ENCODE measurements at regions of chr19 and their contacts with region 1.

Region 1: DNA sequence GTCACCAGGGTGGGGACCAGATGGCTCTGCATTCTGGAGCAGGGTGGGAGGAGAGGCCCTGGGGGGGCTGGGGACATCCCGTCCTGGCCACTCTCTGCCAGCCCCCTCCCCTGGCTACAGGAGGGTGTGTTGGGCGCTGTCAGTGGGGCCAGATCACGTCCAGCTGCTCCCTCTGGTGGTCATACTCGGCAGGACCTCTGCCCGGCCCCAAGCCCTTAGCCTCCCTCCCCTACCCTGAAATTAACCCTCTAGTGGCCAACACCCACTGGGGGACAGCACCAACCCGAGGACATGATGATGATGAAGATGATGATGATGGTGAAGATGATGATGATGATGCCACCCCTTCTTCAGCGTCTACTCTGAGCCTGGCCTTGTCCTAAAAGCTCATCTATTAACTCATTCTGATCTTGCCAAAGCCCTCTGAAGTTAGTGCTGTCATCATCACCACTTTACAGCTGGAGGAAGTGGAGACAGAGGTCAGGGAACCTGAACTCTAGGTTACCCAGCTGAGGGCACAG is 590 bp upstream of the LGI4 start:
- DNase-seq: peak; percentile 81 to 99
- ATAC-seq: peak; percentile 64 to 91
- H3K4me3 ChIP-seq: no peak overlapping the region
- H3K27ac ChIP-seq: no peak overlapping the region
- H3K4me1 ChIP-seq: peaks cover 5% of the 10 kb centered on the region; the same call in 1 of the 3 replicates
- CTCF ChIP-seq: peak; percentile 95
- EP300 ChIP-seq: no peak
- POLR2A ChIP-seq: no peak
- RAD21 ChIP-seq: peak; percentile 76 to 86

Region 2: GRCh38 chr19:35006342-35007018 is 129.0 kb before region 1 on chr19:
- CTCF ChIA-PET with region 1: interaction called, 11 read pairs
- POLR2A ChIA-PET with region 1: interaction called, 3 read pairs
- DNase-seq: peak; percentile 98 to 100
- ATAC-seq: peak; percentile 84 to 92
- H3K4me3 ChIP-seq: peak overlapping the region; percentile 25
- H3K27ac ChIP-seq: peak overlapping the region; percentile 93 to 94
- H3K4me1 ChIP-seq: peaks cover 79% of the 10 kb centered on the region
- CTCF ChIP-seq: peak; percentile 24; the same call in 2 of the 3 replicates
- EP300 ChIP-seq: peak; percentile 97
- POLR2A ChIP-seq: no peak
- RAD21 ChIP-seq: peak; percentile 27 to 71

Region 3: DNA sequence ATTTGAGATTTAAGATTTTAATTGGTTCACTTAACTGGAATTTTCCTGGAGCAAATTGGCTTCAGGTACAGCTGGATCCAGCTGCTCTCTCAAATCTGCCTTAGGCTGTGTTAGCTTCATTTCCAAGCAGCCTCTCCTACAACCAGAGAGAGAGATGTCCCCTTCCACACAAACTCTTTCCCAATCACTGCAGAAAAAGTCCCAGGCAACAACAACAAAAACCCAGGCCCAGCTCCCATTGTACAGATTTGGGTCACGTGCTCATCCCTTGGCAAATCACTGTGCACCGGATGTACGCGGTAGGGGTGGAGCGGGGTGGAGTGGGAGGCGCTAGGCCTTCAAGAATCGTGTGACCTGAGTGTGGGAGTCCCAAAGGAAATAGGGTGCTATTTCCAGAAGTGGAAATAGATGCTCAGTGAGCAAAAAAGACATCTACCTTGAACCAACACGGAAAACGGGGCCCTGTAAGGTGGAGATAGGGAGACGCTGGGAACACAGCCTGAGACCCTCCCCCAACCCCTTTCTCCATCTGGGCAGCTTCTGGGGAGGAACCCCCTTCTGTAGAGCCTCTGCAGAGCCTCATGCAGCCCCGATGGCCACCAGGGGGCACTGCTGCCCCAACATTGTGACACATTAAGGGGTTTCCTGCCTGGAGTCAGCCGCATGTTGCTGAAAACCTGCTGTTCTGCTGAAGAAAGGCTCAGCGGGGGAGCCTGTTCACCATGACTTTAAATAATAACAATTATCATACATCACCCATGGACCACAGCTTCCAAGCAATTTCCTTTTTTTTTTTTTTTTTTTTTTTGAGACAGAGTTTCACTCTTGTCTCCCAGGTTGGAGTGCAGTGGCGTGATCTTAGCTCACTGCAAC is 68.5 kb before region 1 on chr19:
- CTCF ChIA-PET with region 1: interaction called, 119 read pairs
- POLR2A ChIA-PET with region 1: no interaction called
- DNase-seq: peak; percentile 90 to 93
- ATAC-seq: peak; percentile 83 to 95
- H3K4me3 ChIP-seq: no peak overlapping the region; the same call in 2 of the 3 replicates
- H3K27ac ChIP-seq: no peak overlapping the region
- H3K4me1 ChIP-seq: peaks cover 9% of the 10 kb centered on the region; the same call in 2 of the 3 replicates
- CTCF ChIP-seq: peak; percentile 93
- EP300 ChIP-seq: no peak
- POLR2A ChIP-seq: no peak
- RAD21 ChIP-seq: peak; percentile 90 to 94

Region 4: DNA sequence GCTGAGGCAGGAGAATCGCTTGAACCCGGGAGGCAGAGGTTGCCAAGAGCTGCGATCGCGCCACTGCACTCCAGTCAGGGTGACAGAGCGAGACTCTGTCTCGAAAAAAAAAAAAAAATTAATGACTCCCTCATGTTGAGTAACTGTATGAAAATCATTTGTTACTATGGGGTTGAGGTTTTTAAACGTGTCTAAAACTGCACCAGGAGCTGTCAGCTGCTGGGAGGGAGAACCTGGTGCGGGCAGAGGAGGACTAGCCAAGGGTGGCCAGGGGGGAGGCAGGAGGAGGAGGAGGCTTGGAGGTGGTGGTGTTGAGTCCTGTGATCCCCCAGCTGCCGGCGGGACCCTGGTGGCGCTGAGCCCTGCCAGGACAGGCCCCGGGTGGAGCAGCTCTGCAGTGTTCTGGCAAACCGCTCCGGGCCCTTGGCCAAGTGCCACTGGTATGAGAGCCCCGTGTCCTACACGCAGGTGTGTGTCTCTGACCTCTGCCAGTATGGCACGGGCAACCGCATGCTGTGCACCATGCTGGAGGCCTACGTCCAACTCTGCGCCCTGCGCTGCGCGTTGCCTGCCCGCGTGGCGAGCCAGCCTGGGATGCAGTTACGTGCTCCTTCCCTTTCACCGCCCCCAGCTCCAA is 36.9 kb before region 1 on chr19:
- CTCF ChIA-PET with region 1: interaction called, 13 read pairs
- POLR2A ChIA-PET with region 1: no interaction called
- DNase-seq: no peak
- ATAC-seq: peak; percentile 22 to 37; a peak in 4 of 6 replicates
- H3K4me3 ChIP-seq: no peak overlapping the region
- H3K27ac ChIP-seq: no peak overlapping the region
- H3K4me1 ChIP-seq: no peaks in the 10 kb centered on the region
- CTCF ChIP-seq: no peak
- EP300 ChIP-seq: no peak
- POLR2A ChIP-seq: no peak
- RAD21 ChIP-seq: no peak

Region 5: DNA sequence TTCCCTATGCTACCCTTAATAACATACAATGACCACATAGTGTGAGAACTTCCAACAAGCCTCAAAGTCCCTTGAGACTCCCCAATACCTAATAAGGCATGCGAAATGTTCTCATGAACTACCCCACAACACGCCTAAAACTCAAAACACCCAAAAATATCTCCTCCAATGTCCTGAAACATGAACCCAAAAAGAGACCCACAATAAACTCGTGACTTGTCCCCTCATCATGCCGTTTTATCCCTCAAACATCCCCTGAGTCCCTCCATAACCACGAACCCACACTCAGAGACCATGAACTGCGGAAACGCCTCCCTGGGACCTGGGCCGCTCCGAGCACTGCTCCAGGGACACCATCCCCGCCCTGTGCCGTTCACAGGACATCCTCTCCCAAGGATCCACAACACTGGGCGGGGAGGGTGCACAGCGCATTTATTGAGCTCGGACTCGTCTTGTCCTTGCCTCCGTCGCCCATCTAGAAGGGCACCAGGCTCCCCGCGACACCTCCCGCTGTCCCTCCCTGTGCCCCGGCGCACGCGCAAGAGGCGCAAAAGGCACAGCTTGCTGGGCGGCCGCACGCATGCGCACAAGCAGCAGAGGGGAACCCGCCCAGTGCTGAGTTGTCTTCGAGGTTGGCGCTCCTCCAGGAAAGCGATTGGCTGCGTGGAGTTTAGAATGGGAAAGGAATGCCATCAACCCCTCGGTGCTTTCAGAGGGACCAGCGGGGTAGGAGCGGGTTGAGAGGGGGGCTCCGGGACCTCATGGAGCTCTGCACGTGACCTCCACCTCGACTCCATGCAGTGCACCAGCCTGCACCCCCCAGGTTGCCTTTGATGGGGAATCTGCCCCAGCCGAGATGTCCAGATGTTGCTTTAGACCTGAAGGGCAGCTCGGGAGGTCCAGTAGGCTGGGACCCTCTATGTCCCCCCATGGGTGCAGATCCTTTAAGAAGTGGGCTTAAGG is 11.1 kb before region 1 on chr19:
- CTCF ChIA-PET with region 1: interaction called, 148 read pairs
- POLR2A ChIA-PET with region 1: no interaction called
- DNase-seq: peak; percentile 95 to 100
- ATAC-seq: peak; percentile 82 to 96
- H3K4me3 ChIP-seq: peak overlapping the region; percentile 46
- H3K27ac ChIP-seq: peak overlapping the region; percentile 75 to 83
- H3K4me1 ChIP-seq: peaks cover 22% of the 10 kb centered on the region
- CTCF ChIP-seq: no peak
- EP300 ChIP-seq: no peak
- POLR2A ChIP-seq: peak; percentile 99
- RAD21 ChIP-seq: no peak

Region 6: GRCh38 chr19:35220315-35220921 is 85.0 kb after region 1 on chr19:
- CTCF ChIA-PET with region 1: no interaction called
- POLR2A ChIA-PET with region 1: no interaction called
- DNase-seq: no peak
- ATAC-seq: no peak
- H3K4me3 ChIP-seq: no peak overlapping the region
- H3K27ac ChIP-seq: no peak overlapping the region
- H3K4me1 ChIP-seq: no peaks in the 10 kb centered on the region
- CTCF ChIP-seq: no peak
- EP300 ChIP-seq: no peak
- POLR2A ChIP-seq: no peak
- RAD21 ChIP-seq: no peak

Measured in A549 (cell line).